PC-9 (cell line): ENCODE measurements at regions of chr11 and their contacts with region 1.

Region 1: DNA sequence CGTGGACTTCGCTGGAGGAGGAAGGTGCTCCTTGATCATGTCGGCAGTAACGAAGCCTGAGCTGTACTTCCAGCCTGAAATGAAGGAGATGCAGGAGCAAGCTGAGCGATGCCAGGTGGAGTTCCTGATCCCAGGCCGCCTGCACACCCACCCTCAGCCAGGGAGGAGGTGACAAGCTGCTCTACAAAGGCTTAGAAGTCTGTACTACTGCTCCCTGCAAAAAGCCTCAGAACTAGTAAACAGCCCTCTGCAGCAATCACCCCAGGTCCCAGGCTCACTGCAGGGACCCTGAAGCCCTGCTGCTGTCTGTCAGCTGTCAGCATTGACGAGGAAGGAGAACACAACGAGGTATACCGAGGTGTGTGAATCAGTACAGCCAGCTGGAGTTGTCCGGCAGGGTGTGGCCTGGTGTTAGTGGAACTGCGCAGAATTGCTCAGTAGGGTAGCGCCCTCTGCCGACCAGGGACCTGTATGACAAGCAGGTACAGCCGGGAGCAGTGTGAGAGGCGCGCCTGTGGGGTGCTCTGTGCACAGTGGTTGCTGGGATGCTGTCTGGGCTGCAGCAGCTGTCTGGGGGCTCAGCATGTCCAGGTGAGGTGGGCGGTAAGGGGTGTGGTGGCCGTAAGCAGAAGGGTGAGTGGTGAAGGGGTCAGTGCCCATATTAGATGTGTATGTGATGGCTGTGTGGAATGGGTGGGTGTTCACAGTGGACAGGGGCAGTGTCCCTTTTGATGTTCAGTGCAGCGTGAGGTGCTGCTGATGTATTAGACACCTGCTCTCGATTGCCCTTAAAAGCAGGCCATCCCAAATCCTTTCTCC is 7.6 kb downstream of the CYB5R2 start:
- DNase-seq: peak; percentile 42 to 60
- H3K4me3 ChIP-seq: no peak overlapping the region
- H3K27ac ChIP-seq: no peak overlapping the region
- H3K4me1 ChIP-seq: no peaks in the 10 kb centered on the region
- H3K27me3 ChIP-seq: no peaks in the 10 kb centered on the region
- CTCF ChIP-seq: peak; percentile 85

Region 2: DNA sequence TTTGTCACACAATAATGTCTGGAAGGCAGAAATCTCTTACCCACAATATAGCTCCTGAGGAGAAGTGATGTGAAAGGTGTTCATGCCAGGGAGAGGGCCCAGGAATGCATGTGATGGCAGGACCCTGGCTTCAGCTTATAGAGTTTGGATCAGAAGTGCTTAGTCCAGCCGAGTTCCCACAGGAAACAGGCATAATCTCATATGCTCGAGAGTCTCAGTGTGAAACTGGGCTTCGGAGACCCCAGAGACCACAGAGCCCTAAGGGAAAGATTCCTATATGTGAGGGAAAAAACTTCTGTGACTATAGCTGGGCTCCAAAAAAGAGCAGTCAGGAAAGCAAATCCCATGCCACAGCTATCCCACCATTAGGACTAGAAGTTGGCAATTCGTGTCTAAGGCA is 1882.4 kb before region 1 on chr11 and contains the start of gene OR52N5:
- CTCF ChIA-PET with region 1: no interaction called
- POLR2A ChIA-PET with region 1: interaction called, 10 read pairs
- intact Hi-C with region 1: no loop called
- DNase-seq: no peak
- H3K4me3 ChIP-seq: no peak within 1 kb of the TSS
- H3K27ac ChIP-seq: no peak within 1 kb of the TSS
- H3K4me1 ChIP-seq: no peaks in the 10 kb centered on the region
- H3K27me3 ChIP-seq: no peaks in the 10 kb centered on the region
- CTCF ChIP-seq: no peak
- total RNA-seq, gene OR52N5: not detected in 2 replicates

Region 3: GRCh38 chr11:7621090-7621489 is 44.6 kb before region 1 on chr11:
- CTCF ChIA-PET with region 1: no interaction called
- POLR2A ChIA-PET with region 1: no interaction called
- intact Hi-C with region 1: no loop called
- DNase-seq: no peak
- H3K4me3 ChIP-seq: no peak overlapping the region
- H3K27ac ChIP-seq: no peak overlapping the region
- H3K4me1 ChIP-seq: no peaks in the 10 kb centered on the region
- H3K27me3 ChIP-seq: no peaks in the 10 kb centered on the region
- CTCF ChIP-seq: no peak